HEK293 (cell line): ENCODE measurements at regions of chr20 and their contacts with region 1.

Region 1: DNA sequence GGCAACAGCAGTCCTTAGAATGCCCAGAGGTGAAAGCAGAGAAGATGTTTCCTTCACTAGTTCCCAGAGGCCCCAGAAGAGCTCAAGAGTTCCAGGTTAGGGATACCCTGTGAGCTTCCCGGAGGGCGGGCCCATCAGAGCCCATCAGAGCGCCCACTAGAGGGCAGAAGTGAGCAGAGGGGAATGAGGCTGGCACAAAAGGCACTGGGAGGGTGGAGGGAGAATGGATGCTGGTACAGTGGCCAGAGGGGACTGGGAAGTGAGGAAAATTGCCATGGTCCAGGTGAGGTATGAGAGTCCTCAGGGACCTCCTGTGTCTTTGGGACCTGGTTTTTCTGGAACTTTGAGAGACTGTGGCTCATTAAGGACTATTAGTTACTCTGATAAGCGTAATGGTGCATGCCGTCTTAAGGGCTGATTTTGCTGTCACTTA is 57.3 kb downstream of the LINC00237 start:
- H3K4me3 ChIP-seq: no peak overlapping the region
- H3K27ac ChIP-seq: no peak overlapping the region
- H3K4me1 ChIP-seq: peaks cover 7% of the 10 kb centered on the region; the same call in 1 of the 2 replicates
- CTCF ChIP-seq: peak; percentile 21; the same call in 1 of the 2 replicates

Region 2: GRCh38 chr20:21031666-21032065 is 17.2 kb before region 1 on chr20:
- CTCF ChIA-PET with region 1: interaction called, 11 read pairs
- POLR2A ChIA-PET with region 1: no interaction called
- H3K4me3 ChIP-seq: no peak overlapping the region
- H3K27ac ChIP-seq: no peak overlapping the region
- H3K4me1 ChIP-seq: no peaks in the 10 kb centered on the region
- CTCF ChIP-seq: no peak